Heart left ventricle (tissue), 16 donors: ENCODE measurements at regions of chr5 and their contacts with region 1.

Region 1: DNA sequence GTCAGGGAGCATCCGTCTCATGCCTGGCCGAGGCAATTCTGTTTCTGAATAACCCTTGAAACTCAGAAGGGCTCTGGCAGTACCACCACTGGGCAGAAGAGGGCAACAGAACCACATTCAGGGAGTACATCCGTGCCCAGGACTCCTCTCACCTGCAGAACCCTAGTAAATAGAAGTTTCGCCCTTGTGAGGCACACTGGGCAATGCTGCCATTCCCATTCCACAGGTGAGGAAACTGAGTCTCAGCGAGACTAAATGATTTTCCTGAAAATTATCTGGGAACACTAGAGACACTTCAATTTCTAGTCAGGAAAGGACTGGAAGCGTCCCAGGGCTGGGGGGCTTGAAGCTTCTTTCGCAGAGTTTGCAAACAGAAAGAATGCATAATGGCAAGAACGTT is 74.7 kb downstream of the FGF1 start:
- DNase-seq: peak; percentile 65 to 72 (median 69)
- ATAC-seq: peak; percentile 60 to 87 (median 84)
- H3K4me3 ChIP-seq: no peak overlapping the region
- H3K27ac ChIP-seq: peak overlapping the region in 1 of 12 donors; percentile 29
- H3K4me1 ChIP-seq: peaks cover 0 to 27% (median 6%) of the 10 kb centered on the region in 12 donors
- H3K27me3 ChIP-seq: no peaks in the 10 kb centered on the region
- CTCF ChIP-seq: peak; percentile 83 to 95 (median 93)
- POLR2A ChIP-seq: no peak

Region 2: GRCh38 chr5:142644640-142645361 is 33.6 kb after region 1 on chr5:
- intact Hi-C with region 1: loop called in 1 of 10 experiments (anchors 5 kb)
- DNase-seq: peak in 1 of 5 donors; percentile 61
- ATAC-seq: peak; percentile 67 to 88 (median 80)
- H3K4me3 ChIP-seq: no peak overlapping the region
- H3K27ac ChIP-seq: peak overlapping the region in 7 of 12 donors; percentile 2 to 66 (median 44)
- H3K4me1 ChIP-seq: peaks cover 0 to 49% (median 17%) of the 10 kb centered on the region in 12 donors
- H3K27me3 ChIP-seq: no peaks in the 10 kb centered on the region
- CTCF ChIP-seq: no peak
- POLR2A ChIP-seq: no peak

Region 3: DNA sequence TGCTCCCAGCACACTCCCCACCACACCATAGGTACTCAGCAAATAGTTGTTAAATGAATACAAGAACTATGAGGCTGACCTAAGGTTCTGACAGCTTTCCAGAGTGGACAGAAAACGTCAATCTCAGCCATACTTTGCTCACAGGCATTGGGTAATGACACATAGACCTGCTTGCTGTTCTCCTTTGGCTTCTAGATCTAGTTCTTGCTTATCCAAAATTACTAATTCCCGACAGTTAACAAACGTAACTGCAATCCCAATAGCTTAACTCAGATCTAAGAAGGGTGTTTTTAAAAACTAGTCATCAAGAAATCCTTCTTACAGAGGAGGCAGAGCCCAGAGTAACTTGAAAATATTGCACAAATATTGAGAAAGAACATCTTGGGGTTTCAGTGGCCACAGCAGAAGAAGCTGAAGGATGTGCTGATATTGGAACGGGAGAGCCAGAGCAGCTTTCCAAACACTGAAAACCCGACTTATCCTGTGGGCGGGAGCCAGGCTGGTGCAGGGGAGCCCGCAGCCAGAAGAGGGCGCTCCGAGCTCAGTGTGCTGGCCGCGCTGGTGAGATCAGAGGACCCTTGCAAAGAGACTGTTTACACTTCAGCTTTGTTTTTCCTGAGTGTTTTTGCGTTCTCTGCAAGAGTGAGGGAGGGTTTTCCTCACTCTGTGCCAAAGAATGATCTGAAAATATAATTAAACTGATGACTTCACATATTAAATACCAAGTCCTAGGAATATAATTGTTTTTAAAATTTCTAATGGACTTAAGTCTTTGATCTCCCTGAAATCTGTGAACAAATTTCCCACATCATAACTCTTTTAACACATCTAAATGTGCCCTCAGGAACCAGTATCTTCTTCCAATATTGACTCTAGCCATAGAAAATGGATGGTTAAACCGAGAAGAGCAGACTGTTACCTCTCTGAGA is 44.4 kb after region 1 on chr5:
- intact Hi-C with region 1: loop called in 9 of 10 experiments (anchors 1 to 5 kb)
- DNase-seq: peak; percentile 81 to 92 (median 88)
- ATAC-seq: peak; percentile 85 to 94 (median 91)
- H3K4me3 ChIP-seq: peak overlapping the region in 1 of 12 donors; percentile 2
- H3K27ac ChIP-seq: peak overlapping the region in 11 of 12 donors; percentile 33 to 82 (median 63)
- H3K4me1 ChIP-seq: peaks cover 0 to 61% (median 25%) of the 10 kb centered on the region in 12 donors
- H3K27me3 ChIP-seq: no peaks in the 10 kb centered on the region
- CTCF ChIP-seq: peak; percentile 97 to 100 (median 99)
- POLR2A ChIP-seq: no peak

Region 4: DNA sequence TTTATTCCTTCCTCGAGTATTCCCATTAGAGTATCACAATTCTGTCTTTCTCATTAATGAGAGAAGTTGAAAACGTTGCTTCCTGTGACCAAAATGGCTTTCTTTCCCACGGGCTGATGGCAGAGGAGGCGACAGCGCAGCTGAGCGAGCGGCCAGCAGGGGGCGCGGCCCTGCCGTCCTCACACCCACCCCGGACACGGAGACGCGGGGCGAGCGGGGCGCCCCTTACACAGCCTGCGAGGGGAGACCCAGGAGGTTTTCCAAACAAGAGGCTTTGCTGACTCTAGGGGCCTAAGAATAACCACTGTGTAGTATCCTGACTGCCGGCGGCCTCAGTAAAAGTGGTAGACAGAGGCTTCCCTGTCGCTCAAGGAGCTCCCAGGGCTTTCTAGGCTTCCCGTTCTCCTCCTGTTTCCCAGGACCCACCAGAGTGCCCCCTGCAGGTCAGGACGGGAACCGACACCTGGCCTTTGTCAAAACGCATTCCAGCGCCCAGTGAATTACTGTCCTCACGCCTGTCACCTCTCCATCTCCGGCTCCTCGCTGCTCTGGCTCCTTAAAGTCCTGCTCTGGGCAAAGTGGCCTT is 102.1 kb after region 1 on chr5:
- intact Hi-C with region 1: loop called in 1 of 10 experiments (anchors 5 kb)
- DNase-seq: peak; percentile 88 to 94 (median 91)
- ATAC-seq: peak; percentile 60 to 88 (median 86)
- H3K4me3 ChIP-seq: peak overlapping the region in 11 of 12 donors; percentile 31 to 63 (median 56)
- H3K27ac ChIP-seq: peak overlapping the region; percentile 63 to 96 (median 88)
- H3K4me1 ChIP-seq: peaks cover 0 to 46% (median 25%) of the 10 kb centered on the region in 12 donors
- H3K27me3 ChIP-seq: no peaks in the 10 kb centered on the region
- CTCF ChIP-seq: peak; percentile 91 to 99 (median 97)
- POLR2A ChIP-seq: peak in 1 of 2 donors; percentile 27

Region 5: GRCh38 chr5:142888469-142889085 is 277.4 kb after region 1 on chr5:
- intact Hi-C with region 1: loop called in 5 of 10 experiments (anchors 5 to 10 kb)
- DNase-seq: no peak
- ATAC-seq: peak; percentile 21 to 66 (median 60)
- H3K4me3 ChIP-seq: no peak overlapping the region
- H3K27ac ChIP-seq: no peak overlapping the region
- H3K4me1 ChIP-seq: peaks cover 0 to 47% (median 18%) of the 10 kb centered on the region in 12 donors
- H3K27me3 ChIP-seq: no peaks in the 10 kb centered on the region
- CTCF ChIP-seq: peak; percentile 68 to 87 (median 79)
- POLR2A ChIP-seq: no peak